GM13976 (cell line): ENCODE measurements at regions of chr9 and their contacts with region 1.

Region 1: DNA sequence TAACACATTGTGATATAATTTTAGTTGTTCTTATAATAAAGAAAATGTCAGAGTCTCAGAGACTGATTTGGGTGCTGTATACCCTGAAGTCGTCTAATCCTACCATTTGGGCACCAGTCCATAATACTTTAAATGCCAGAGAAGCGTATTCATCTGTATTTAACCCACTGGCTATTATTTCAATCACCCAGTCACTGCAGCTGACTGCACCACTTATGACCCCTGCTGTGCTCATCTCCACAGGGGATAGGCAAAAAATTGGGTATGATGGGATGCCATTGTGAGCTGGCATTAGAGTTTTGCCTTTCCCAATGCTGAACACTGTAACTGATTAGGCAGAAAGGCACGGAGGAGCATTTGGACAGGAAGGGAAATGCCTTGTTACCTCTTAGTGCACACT is 599.7 kb downstream of the CAAP1 start:
- DNase-seq: no peak
- CTCF ChIP-seq: no peak

Region 2: DNA sequence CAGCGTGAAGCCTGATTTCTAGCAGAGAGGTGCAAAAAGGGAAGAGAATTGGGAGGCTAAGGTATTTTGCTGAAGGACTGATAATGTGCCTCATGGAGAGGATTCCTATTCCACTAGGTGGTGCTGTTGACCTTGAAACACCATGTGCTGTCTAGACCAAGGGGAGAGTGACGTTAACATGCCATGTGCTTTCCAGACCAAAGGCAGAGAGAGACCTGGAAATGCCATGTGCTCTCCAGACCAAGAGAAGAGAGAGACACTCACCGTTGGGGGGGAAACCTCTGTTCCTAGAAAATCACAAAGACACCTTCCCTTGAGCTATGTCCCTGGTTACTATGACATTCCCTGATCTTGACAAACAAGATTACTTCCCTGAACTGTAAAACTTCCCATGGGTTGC is 328.7 kb before region 1 on chr9:
- in situ Hi-C with region 1: loop called (anchors 25 kb)
- DNase-seq: peak; percentile 16
- CTCF ChIP-seq: peak; percentile 43

Region 3: DNA sequence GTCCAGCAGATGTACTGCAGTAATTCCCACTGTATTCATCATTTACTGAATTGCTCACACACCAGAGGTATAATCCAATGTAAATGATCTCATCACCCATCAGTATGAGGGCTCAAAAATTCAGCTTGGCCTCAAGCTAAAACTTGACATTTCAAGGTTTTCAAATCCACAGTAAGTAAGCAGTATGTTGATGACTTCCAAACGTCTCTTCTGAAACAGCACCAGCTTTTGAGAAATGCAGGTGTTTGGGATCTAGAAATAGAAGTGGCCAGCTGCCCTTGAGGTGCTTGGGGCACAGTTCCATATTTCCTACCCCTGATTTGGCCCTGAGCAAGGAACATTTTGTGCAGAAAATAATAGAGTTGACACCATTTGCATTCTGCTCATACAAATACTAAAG is 226.7 kb before region 1 on chr9:
- in situ Hi-C with region 1: no loop called
- DNase-seq: no peak
- CTCF ChIP-seq: no peak